Colonic mucosa (tissue), 4 donors: ENCODE measurements at regions of chr20 and their contacts with region 1.

Region 1: DNA sequence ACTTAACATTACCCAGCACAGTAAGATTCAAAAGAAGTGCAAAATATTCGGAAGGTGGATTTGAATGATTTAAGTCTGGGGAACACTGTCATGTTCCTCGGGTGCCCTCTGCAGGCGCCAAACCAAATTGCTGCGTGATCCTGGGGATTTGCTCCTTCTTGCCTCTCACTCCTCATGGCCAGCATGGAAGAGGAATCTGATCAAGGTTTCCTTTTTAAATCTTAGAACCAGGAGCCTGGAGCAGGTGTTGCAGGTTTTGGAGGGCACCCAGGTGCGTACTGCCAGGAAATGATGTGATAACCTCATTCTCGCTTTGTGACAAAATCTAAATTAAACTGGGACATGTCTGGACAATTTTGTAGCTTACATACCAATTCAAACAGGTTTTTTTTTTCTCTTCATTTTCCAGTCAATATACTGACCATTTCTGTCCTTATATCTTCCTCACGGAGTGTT is 8.1 kb upstream of the PFDN4 start:
- DNase-seq: peak; percentile 85
- H3K4me3 ChIP-seq: no peak overlapping the region
- H3K27ac ChIP-seq: no peak overlapping the region
- H3K4me1 ChIP-seq: peaks cover 3% of the 10 kb centered on the region
- H3K27me3 ChIP-seq: no peaks in the 10 kb centered on the region
- CTCF ChIP-seq: peak; percentile 83

Region 2: GRCh38 chr20:54097236-54097529 is 102.6 kb before region 1 on chr20:
- intact Hi-C with region 1: loop called (anchors 2 kb)
- DNase-seq: no peak
- H3K4me3 ChIP-seq: no peak overlapping the region
- H3K27ac ChIP-seq: no peak overlapping the region
- H3K4me1 ChIP-seq: no peaks in the 10 kb centered on the region
- H3K27me3 ChIP-seq: no peaks in the 10 kb centered on the region
- CTCF ChIP-seq: no peak